IMR-90 (cell line): ENCODE measurements at regions of chr9 and their contacts with region 1.

Region 1: DNA sequence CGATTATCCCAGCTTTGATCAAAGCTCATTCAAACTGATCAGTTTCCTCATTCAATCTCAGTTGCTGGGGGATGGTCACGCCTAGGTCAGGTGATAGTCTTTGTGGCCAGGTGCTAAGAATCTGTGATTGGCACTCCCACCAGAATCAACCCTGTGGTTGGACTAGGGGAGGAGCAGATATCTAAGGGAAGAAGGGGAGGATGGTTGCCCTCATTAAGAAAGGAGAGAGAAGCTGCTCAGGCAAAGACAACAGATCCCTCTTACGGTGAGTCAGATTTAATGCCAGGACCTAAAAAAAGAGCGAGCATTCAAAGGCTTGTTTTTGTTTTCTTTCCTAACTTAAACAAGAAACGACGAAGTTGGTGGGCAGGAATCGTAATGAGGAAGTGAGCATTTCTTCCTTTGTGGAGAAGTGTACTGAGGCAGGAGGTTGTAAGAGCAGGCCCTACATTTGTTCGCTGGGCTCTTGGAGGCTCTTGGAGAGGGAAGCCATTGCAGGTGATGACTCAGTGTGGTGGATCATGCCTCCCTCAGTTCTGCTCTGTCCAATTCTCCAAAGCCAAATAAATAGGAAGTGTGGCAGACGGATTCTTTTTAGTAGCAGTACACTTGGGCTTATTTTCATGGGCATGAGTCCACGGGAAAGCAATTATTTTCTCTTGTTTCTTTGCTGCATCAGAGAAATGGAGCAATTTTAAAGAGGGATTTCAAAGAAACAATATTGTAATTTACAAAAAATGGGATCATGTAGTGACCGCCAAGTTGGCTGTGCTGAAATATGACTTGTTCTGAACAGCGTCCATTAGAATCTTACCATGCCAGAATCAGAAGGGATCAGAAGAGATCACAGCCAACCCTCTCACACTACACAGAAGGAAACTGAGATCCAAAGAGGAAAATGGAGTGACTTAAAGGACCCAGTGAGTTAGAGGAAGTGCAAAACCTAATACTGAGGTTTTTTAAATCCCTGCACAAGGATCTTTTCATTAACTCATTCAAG is 18.7 kb upstream of the TGFBR1 start:
- DNase-seq: peak; percentile 90
- ATAC-seq: peak; percentile 95
- H3K4me3 ChIP-seq: no peak overlapping the region
- H3K27ac ChIP-seq: no peak overlapping the region
- H3K4me1 ChIP-seq: peaks cover 12% of the 10 kb centered on the region
- H3K27me3 ChIP-seq: peaks cover 5% of the 10 kb centered on the region; the same call in 1 of the 2 replicates
- CTCF ChIP-seq: no peak
- POLR2A ChIP-seq: no peak
- RAD21 ChIP-seq: no peak

Region 2: DNA sequence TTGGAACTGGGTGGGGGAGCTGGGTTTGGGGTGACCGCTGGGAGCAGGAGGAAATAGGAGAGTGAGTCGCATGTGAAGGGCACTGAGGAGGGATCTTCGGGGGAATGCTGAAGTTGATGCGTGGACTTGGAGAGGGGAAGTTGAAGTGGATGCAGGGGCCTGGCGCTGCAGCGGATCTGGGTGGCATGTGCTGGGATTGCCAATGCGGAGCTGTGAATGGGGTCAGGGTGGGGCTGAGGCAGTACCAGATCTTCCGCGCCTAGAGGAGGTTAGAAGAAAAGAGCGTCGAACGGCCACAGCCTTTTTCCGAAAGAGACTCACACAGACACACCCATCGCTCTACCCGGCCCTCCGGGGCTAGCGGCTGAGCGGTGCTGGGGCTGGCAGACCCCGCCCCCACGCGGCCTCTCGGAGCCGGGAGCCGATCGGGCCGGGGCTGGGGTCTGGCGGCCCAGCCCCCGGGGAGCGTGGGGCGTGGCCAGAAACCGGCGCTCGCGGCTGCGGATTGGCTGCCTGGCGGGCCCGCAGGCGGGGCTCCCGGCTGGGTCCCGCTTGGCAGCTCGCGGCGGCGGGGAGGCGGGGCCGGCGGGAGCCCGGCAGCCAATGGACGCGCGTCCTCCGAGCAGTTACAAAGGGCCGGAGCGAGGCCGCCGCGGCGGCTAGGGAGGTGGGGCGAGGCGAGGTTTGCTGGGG is 18.4 kb after region 1 on chr9 and contains the start of gene TGFBR1:
- CTCF ChIA-PET with region 1: interaction called, 5 read pairs
- POLR2A ChIA-PET with region 1: no interaction called
- dilution Hi-C with region 1: no loop called
- in situ Hi-C with region 1: no loop called
- intact Hi-C with region 1: loop called (anchors 2 kb)
- DNase-seq: peak; percentile 89
- ATAC-seq: peak; percentile 89
- H3K4me3 ChIP-seq: peak within 1 kb of the TSS; percentile 67
- H3K27ac ChIP-seq: peak within 1 kb of the TSS; percentile 95
- H3K4me1 ChIP-seq: peaks cover 14% of the 10 kb centered on the region
- H3K27me3 ChIP-seq: no peaks in the 10 kb centered on the region
- CTCF ChIP-seq: no peak
- POLR2A ChIP-seq: peak; percentile 93
- RAD21 ChIP-seq: no peak; the same call in 1 of the 2 replicates
- total RNA-seq, gene TGFBR1: 57.8 and 75.3 TPM in 2 replicates

Region 3: GRCh38 chr9:99221621-99222415 is 135.6 kb after region 1 on chr9 and contains the starts of genes ALG2 and SEC61B:
- CTCF ChIA-PET with region 1: no interaction called
- POLR2A ChIA-PET with region 1: no interaction called
- dilution Hi-C with region 1: no loop called
- in situ Hi-C with region 1: no loop called
- intact Hi-C with region 1: no loop called
- DNase-seq: peak; percentile 96
- ATAC-seq: peak; percentile 95
- H3K4me3 ChIP-seq: peak within 1 kb of the TSS; percentile 92
- H3K27ac ChIP-seq: peak within 1 kb of the TSS; percentile 98
- H3K4me1 ChIP-seq: no peaks in the 10 kb centered on the region; the same call in none of the 2 replicates
- H3K27me3 ChIP-seq: no peaks in the 10 kb centered on the region
- CTCF ChIP-seq: no peak
- POLR2A ChIP-seq: peak; percentile 96
- RAD21 ChIP-seq: no peak
- total RNA-seq, gene ALG2: 33.9 and 38.4 TPM in 2 replicates
- total RNA-seq, gene SEC61B: 180 and 184 TPM in 2 replicates